Aorta (tissue), 5 donors: ENCODE measurements at regions of chr5 and their contacts with region 1.

Region 1: DNA sequence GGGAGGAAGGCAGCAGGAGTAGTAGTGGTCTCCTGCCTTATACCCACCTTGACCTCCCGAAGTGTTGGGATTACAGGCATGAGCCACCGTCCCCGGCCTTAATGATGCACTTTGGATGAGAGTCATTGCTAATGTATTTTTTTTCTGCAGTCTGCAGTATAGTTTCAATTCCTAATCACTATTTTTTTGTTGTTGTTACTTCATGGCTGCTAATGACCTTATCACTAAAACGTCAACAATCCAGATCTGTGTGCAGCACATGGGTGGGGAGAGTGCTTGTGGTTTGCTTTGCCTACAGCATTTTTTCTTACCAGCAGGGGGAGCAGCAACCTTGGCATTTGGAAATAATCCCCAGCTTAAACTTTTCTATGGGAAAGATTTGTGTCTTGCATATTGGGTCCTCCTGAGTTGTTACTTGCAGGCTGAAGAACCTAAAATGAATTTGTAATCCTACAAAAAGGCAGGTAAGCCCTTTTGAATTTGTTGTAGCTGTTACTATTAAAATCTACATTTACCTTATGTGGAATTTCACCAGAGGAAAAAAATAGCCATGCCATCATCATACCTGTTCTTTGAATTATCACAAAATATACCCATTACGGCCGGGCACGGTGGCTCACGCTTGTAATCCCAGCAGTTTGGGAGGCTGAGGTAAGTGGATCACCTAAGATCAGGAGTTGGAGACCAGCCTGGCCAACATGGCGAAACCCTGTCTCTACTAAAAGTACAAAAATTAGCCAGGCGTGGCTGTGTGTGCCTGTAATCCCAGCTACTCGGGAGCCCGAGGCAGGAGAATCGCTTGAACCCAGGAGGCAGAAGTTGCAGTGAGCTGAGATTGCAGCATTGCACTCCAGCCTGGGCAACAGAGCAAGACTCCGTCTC is 6.3 kb upstream of the MED7 start:
- DNase-seq: peak in 1 of 2 donors; percentile 68
- ATAC-seq: peak; percentile 81
- H3K4me3 ChIP-seq: peak overlapping the region in 1 of 2 donors; percentile 26
- H3K27ac ChIP-seq: no peak overlapping the region
- H3K4me1 ChIP-seq: no peaks in the 10 kb centered on the region
- H3K27me3 ChIP-seq: no peaks in the 10 kb centered on the region

Region 2: GRCh38 chr5:157253547-157253946 is 104.6 kb after region 1 on chr5:
- intact Hi-C with region 1: loop called in 1 of 2 experiments (anchors 5 kb)
- DNase-seq: no peak
- ATAC-seq: peak; percentile 89
- H3K4me3 ChIP-seq: no peak overlapping the region
- H3K27ac ChIP-seq: no peak overlapping the region
- H3K4me1 ChIP-seq: no peaks in the 10 kb centered on the region
- H3K27me3 ChIP-seq: no peaks in the 10 kb centered on the region

Region 3: DNA sequence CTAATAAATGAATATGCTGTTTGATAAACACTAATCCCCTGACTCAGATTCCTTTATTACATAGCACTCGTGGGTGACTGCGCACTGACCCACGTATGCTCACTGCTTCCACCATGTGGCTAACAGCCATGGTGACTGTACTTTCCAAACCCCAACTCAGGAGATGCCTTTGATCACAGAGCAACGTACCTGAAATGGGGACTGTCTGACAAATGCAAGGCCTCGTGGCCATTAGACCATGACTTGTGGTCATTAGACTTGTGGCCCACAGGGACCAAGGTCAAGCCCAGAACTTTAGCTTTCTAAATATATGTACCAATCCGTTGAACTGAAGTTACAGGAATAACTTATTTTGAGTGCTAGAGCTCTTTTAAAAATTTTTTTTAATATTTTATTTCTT is 163.5 kb after region 1 on chr5:
- intact Hi-C with region 1: loop called (anchors 5 kb)
- DNase-seq: peak in 1 of 2 donors; percentile 56
- ATAC-seq: no peak
- H3K4me3 ChIP-seq: no peak overlapping the region
- H3K27ac ChIP-seq: no peak overlapping the region
- H3K4me1 ChIP-seq: no peaks in the 10 kb centered on the region
- H3K27me3 ChIP-seq: no peaks in the 10 kb centered on the region